ENCODE measurements at regions of chr7 and their contacts with region 1.

Region 1: GRCh38 chr7:67928141-67928540 is 931.5 kb downstream of the TYW1 start:
- DNase-seq: no peak
- H3K4me3 ChIP-seq: no peak overlapping the region
- H3K27ac ChIP-seq: no peak overlapping the region
- H3K4me1 ChIP-seq: no peaks in the 10 kb centered on the region
- H3K27me3 ChIP-seq: no peaks in the 10 kb centered on the region
- CTCF ChIP-seq: no peak

Region 2: GRCh38 chr7:67619175-67619574 is 309.0 kb before region 1 on chr7:
- intact Hi-C with region 1: no loop called
- DNase-seq: no peak
- H3K4me3 ChIP-seq: no peak overlapping the region
- H3K27ac ChIP-seq: no peak overlapping the region
- H3K4me1 ChIP-seq: no peaks in the 10 kb centered on the region
- H3K27me3 ChIP-seq: no peaks in the 10 kb centered on the region
- CTCF ChIP-seq: no peak

Region 3: GRCh38 chr7:67809593-67809992 is 118.5 kb before region 1 on chr7:
- intact Hi-C with region 1: loop called (anchors 10 kb)
- DNase-seq: no peak
- H3K4me3 ChIP-seq: no peak overlapping the region
- H3K27ac ChIP-seq: no peak overlapping the region
- H3K4me1 ChIP-seq: no peaks in the 10 kb centered on the region
- H3K27me3 ChIP-seq: no peaks in the 10 kb centered on the region
- CTCF ChIP-seq: no peak

Region 4: GRCh38 chr7:68107261-68107660 is 179.1 kb after region 1 on chr7:
- intact Hi-C with region 1: no loop called
- DNase-seq: no peak
- H3K4me3 ChIP-seq: no peak overlapping the region
- H3K27ac ChIP-seq: no peak overlapping the region
- H3K4me1 ChIP-seq: no peaks in the 10 kb centered on the region
- H3K27me3 ChIP-seq: no peaks in the 10 kb centered on the region
- CTCF ChIP-seq: no peak

Region 5: DNA sequence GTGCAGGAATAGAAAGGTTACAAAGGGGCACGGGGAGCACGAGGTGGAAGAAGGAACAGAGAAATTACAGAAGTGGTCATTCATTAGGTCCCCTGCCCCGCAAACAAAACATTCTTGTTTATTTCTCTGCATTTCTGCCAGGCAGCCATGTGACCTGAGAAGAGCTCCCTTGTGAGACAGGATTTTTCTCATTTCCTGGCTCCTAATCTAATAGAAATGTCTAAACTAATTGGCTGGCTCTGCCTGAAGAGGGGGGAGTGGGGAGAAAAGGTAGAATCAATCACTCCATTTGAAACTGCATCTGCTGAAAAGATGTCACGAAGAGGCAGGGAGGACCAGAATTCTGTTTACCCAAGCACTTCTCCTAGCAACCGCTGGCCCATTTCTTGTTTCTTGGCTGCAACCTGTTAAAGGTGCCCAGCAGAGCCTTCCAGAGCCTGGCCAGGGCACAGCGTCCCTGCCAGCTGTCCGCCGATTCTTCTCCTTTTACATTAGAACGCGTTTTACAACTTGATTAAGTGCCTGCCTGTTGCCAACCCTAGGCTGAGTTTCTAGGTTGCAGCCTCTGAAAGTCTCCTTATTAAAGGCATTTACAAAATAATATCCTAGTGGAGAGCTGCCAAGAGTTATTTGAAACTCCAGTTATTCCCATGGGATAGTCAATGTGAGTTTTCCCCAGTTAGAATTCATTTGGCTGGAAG is 296.1 kb after region 1 on chr7:
- intact Hi-C with region 1: no loop called
- DNase-seq: no peak
- H3K4me3 ChIP-seq: no peak overlapping the region
- H3K27ac ChIP-seq: no peak overlapping the region
- H3K4me1 ChIP-seq: no peaks in the 10 kb centered on the region
- H3K27me3 ChIP-seq: no peaks in the 10 kb centered on the region
- CTCF ChIP-seq: no peak